H1 (cell line): ENCODE measurements at regions of chr19 and their contacts with region 1.

Region 1: GRCh38 chr19:7868676-7869452 is 5.3 kb downstream of the PRR36 start:
- DNase-seq: peak; percentile 82 to 97
- H3K4me3 ChIP-seq: peak overlapping the region; percentile 26 to 61 (median 44)
- H3K27ac ChIP-seq: no peak overlapping the region; the same call in 1 of the 2 replicates
- H3K4me1 ChIP-seq: peaks cover 0 to 26% (median 14%) of the 10 kb centered on the region in 4 experiments; a peak in 5 of 7 replicates
- H3K27me3 ChIP-seq: peaks cover 2 to 33% (median 22%) of the 10 kb centered on the region in 4 experiments
- CTCF ChIP-seq: peak; percentile 80 to 86 (median 81)
- EP300 ChIP-seq: no peak
- POLR2A ChIP-seq: no peak; a peak in 2 of 3 replicates
- RAD21 ChIP-seq: peak in 1 of 2 experiments; percentile 46; a peak in 1 of 4 replicates

Region 2: DNA sequence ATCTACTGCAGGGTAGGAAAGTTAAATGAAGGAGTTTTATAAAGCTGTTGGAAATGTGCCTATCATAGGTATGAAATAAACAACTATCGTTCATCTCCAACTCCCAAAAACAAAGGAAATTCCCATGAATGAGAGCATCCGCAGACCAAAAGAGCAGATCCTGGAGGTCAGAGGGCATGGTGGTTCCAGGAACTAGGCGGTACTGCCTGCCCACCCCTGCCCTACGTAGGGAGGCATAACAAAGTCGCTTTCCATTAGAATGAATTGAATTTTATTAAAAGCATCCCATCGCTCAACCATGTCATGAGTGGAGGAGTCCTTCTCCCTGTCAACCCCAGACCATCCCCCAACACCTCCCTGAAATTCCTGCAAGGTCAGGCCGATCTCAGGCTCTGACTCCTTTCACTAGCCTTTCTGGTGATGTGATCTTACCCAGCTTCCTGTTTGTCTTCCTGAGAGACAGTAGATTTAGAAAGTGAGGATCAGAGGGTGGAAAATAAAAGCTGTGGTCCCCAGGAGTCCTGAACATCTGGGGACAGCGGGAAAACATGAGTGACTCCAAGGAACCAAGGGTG is 106.1 kb before region 1 on chr19 and contains the start of gene CLEC4M:
- CTCF ChIA-PET with region 1: no interaction called
- POLR2A ChIA-PET with region 1: no interaction called
- DNase-seq: no peak
- H3K4me3 ChIP-seq: no peak within 1 kb of the TSS
- H3K27ac ChIP-seq: no peak within 1 kb of the TSS
- H3K4me1 ChIP-seq: peaks cover 0 to 3% (median 0%) of the 10 kb centered on the region in 4 experiments; a peak in 1 of 7 replicates
- H3K27me3 ChIP-seq: no peaks in the 10 kb centered on the region
- CTCF ChIP-seq: no peak
- EP300 ChIP-seq: no peak
- POLR2A ChIP-seq: no peak
- RAD21 ChIP-seq: no peak
- total RNA-seq, gene CLEC4M: not detected in 2 replicates

Region 3: DNA sequence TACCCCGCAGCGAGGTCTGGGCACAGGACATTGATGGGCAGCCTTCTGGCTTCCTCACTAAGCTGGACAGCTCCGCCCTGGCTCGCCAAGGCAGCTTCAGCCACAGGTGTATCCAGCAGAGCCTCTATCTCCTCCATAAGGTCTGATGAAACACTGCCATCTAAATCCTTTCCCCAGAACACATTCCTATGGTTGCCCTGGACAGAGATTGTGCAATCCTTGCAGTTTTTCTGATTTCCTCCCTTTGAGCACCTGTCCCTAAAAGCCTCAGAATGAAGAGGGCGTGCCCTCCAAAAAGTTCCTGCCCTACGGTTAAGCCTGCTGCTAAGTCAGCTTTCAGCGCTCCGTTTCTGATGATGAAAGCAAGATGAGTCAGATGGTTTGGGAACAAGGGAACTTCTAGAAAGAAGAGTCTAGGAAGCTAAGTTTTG is 84.9 kb before region 1 on chr19:
- CTCF ChIA-PET with region 1: no interaction called
- POLR2A ChIA-PET with region 1: no interaction called
- DNase-seq: no peak
- H3K4me3 ChIP-seq: no peak overlapping the region
- H3K27ac ChIP-seq: no peak overlapping the region
- H3K4me1 ChIP-seq: peaks cover 0 to 15% (median 8%) of the 10 kb centered on the region in 4 experiments; a peak in 6 of 7 replicates
- H3K27me3 ChIP-seq: peaks cover 10 to 22% (median 20%) of the 10 kb centered on the region in 4 experiments
- CTCF ChIP-seq: no peak
- EP300 ChIP-seq: no peak
- POLR2A ChIP-seq: no peak
- RAD21 ChIP-seq: no peak

Region 4: GRCh38 chr19:7881910-7882309 is 13.0 kb after region 1 on chr19:
- CTCF ChIA-PET with region 1: interaction called, 13 read pairs
- POLR2A ChIA-PET with region 1: interaction called, 4 read pairs
- DNase-seq: no peak
- H3K4me3 ChIP-seq: no peak overlapping the region
- H3K27ac ChIP-seq: no peak overlapping the region
- H3K4me1 ChIP-seq: no peaks in the 10 kb centered on the region
- H3K27me3 ChIP-seq: no peaks in the 10 kb centered on the region
- CTCF ChIP-seq: no peak
- EP300 ChIP-seq: no peak
- POLR2A ChIP-seq: no peak
- RAD21 ChIP-seq: no peak